GM10248 (cell line): ENCODE measurements at regions of chr12 and their contacts with region 1.

Region 1: DNA sequence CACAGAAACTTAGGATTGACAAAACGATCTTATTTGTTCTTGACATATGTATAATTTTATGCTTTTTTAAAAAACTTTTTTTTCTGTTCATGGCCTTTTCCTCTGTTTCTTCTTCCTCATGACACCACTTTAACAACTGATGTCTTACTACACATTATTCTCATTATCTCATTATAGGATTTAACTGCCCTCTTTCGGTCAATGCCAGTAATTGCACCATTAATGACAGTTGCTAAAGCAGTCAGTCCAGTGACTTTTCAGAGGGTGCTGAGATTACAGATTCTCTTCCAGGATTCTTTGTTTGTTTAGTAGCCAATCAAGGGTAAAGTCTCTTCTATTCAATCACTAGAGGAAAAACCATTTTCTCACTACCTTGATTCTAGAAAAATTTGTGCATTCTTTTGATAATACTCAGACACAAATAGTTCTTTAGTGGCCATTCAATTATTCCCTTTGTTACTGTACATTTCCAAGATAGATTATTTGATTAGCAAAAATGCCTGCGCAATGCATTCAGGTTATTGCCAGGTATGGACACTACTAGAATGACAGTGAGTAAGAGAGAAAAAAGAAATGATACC is 50.1 kb downstream of the KLRG1 start:
- DNase-seq: peak; percentile 76
- CTCF ChIP-seq: peak; percentile 82

Region 2: GRCh38 chr12:8681041-8681902 is 358.2 kb before region 1 on chr12:
- CTCF ChIA-PET with region 1: interaction called, 17 read pairs
- POLR2A ChIA-PET with region 1: no interaction called
- DNase-seq: no peak
- CTCF ChIP-seq: no peak

Region 3: DNA sequence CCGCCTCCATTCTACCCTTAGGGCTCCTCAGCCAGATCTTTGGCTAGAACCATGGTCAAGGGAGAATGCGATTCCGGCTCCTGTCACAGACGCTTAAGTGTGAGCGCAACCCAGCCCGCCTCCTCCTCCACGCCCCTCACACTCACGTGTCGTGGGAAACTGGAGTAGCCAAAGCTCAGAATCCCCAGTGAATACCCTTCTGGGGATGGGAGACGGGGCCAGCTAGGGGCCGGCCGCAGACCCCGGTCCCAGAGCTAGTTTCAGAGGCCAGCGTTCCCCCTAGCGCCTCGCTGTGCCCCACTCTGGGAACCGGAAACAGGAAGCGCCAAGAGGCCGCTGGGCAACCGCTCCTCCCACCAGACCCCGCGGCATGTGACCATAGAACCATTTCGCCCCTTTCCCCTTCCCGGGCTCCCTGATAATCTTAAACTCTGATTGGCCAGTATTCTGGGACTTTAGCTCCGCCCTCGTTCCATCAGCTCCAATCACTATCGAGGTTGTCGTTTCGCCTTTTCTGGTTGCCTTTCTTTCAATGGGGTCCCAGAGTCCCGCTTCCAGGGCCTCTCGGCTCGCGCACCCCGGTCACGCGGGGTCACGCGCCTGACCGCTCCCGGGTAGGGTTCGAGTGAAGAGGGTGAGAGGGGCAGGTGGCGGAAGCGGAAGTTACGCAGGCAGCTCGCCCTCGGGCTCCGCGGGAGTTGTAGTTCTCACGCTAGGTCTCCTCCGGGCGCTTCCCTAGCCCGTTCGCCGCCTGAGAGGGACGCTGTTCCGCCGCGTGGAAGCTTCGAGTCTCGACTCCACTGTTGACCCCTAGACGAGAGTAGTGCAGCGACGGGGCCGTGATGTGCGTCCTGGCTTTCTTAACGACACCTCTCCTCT is 89.9 kb before region 1 on chr12 and contains the start of gene M6PR:
- CTCF ChIA-PET with region 1: interaction called, 25 read pairs
- POLR2A ChIA-PET with region 1: no interaction called
- DNase-seq: peak; percentile 92
- CTCF ChIP-seq: peak; percentile 77

Region 4: GRCh38 chr12:8989413-8989812 is 50.1 kb before region 1 on chr12 and contains the start of gene KLRG1:
- CTCF ChIA-PET with region 1: no interaction called
- POLR2A ChIA-PET with region 1: no interaction called
- DNase-seq: no peak
- CTCF ChIP-seq: no peak

Region 5: GRCh38 chr12:9027161-9028059 is 12.1 kb before region 1 on chr12:
- CTCF ChIA-PET with region 1: interaction called, 12 read pairs
- POLR2A ChIA-PET with region 1: no interaction called
- DNase-seq: no peak
- CTCF ChIP-seq: no peak

Region 6: DNA sequence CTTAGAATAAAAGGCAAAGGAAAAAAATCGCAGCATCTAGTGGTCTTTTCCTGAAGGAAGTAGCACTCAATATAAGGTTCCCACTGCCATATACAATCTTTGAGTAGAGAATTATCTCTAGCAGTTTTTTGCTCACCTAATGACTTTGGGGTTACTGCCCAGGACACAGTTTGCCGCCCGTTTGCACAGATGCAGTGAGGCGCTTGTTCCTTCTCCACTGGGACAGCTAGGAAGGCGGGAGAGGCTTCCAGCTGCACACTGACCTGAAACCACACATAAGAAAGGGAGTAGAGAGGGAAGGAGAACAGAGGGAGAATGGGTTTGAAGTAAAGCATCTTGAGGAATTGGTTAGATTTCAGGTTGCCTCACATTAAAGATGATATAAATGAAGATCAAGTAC is 50.7 kb after region 1 on chr12:
- CTCF ChIA-PET with region 1: no interaction called
- POLR2A ChIA-PET with region 1: no interaction called
- DNase-seq: no peak
- CTCF ChIP-seq: no peak